ENCODE measurements at regions of chr15 and their contacts with region 1.

Region 1: DNA sequence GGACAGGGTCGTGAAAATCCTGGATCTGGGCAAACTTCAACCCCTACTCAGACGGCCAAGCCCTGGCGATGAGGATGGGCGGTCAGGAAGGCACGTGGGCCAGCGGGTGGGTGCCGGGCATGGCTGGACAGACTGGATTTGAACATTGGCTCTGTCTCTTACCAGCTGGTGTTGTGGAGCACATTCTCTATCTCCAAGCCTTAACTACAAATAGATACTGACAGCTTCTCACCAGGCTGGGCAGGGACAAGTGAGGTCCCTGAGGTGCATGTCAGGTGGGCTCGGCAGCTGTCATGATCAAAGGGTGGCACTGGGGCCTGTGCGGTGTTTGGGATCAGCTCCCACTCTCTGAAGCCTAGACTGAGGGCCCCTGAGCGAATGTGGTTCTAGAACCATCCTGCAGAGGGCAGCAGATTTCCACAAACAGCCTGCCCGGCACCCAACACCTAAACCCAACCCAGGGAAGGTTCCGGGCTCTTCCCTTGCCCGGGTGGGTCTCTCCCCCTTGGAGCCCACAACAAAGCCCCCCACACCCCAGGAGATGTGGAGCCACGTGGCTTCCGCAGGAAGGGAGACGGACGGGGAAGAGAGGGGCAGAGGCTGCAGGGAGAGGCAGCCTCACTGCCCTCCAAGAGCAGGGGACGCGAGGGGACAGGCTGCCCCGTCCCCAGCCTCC is 58.4 kb downstream of the RGMA start:
- DNase-seq: peak; percentile 90
- H3K4me3 ChIP-seq: no peak overlapping the region
- H3K27ac ChIP-seq: peak overlapping the region; percentile 84 to 91 (median 88)
- H3K4me1 ChIP-seq: peaks cover 0 to 75% (median 68%) of the 10 kb centered on the region in 4 donors
- H3K27me3 ChIP-seq: no peaks in the 10 kb centered on the region
- CTCF ChIP-seq: peak; percentile 83 to 92 (median 89)
- EP300 ChIP-seq: no peak
- POLR2A ChIP-seq: no peak

Region 2: DNA sequence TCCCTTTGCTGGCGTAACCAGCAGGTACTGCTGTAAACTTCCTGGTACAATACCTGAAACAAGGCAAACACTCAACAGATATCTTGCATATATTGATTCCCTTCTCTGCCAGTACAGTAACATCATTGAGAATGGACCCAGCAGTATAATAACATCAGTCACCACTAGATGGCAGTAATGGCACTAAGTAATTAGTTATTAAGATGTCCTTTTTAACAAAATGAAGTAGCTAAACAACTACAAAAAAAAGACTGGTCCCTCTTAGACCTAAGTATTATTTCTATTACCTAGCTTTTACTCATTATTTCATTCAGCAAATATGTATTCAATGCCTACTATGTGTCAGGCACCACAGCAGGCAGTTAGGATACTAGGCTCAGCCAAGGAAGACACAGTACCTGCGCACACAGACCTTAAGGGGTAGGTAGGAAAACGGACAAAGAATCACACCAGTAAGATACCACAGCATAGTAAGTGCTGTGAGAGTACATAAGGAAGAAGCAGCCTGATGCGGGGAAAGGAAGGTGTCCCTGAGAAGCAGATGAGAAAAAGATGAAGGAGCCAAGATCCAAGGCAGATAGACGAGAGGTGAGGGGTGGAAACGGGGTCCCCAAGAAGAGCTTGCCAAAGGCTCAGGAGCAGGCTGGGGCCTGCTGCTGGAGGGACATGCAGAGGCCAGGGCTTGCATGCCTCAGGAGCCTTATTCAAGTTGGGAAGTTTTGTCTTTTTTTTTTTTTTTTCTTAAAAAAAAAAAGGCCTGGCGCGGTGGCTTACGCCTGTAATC is 233.2 kb before region 1 on chr15:
- intact Hi-C with region 1: loop called (anchors 2 kb)
- DNase-seq: no peak
- H3K4me3 ChIP-seq: no peak overlapping the region
- H3K27ac ChIP-seq: peak overlapping the region; percentile 50 to 62 (median 56)
- H3K4me1 ChIP-seq: peaks cover 0 to 19% (median 12%) of the 10 kb centered on the region in 4 donors
- H3K27me3 ChIP-seq: no peaks in the 10 kb centered on the region
- CTCF ChIP-seq: peak; percentile 60 to 86 (median 80)
- EP300 ChIP-seq: no peak
- POLR2A ChIP-seq: no peak

Region 3: GRCh38 chr15:92968926-92969651 is 61.5 kb before region 1 on chr15:
- intact Hi-C with region 1: no loop called
- DNase-seq: no peak
- H3K4me3 ChIP-seq: no peak overlapping the region
- H3K27ac ChIP-seq: peak overlapping the region in 3 of 4 donors; percentile 36 to 50 (median 43)
- H3K4me1 ChIP-seq: peaks cover 0 to 27% (median 16%) of the 10 kb centered on the region in 4 donors
- H3K27me3 ChIP-seq: no peaks in the 10 kb centered on the region
- CTCF ChIP-seq: no peak
- EP300 ChIP-seq: no peak
- POLR2A ChIP-seq: no peak

Region 4: GRCh38 chr15:93087825-93088199 is 57.2 kb after region 1 on chr15:
- intact Hi-C with region 1: loop called (anchors 2 kb)
- DNase-seq: peak; percentile 92
- H3K4me3 ChIP-seq: peak overlapping the region; percentile 54 to 87 (median 72)
- H3K27ac ChIP-seq: peak overlapping the region; percentile 85 to 96 (median 90)
- H3K4me1 ChIP-seq: peaks cover 0 to 58% (median 37%) of the 10 kb centered on the region in 4 donors
- H3K27me3 ChIP-seq: peaks cover 0 to 5% (median 0%) of the 10 kb centered on the region in 3 donors
- CTCF ChIP-seq: peak; percentile 83 to 90 (median 89)
- EP300 ChIP-seq: no peak
- POLR2A ChIP-seq: no peak

Region 5: GRCh38 chr15:93515256-93516051 is 484.9 kb after region 1 on chr15:
- intact Hi-C with region 1: loop called (anchors 10 kb)
- DNase-seq: peak; percentile 79
- H3K4me3 ChIP-seq: no peak overlapping the region
- H3K27ac ChIP-seq: peak overlapping the region in 3 of 4 donors; percentile 41 to 53 (median 42)
- H3K4me1 ChIP-seq: peaks cover 0 to 34% (median 29%) of the 10 kb centered on the region in 4 donors
- H3K27me3 ChIP-seq: no peaks in the 10 kb centered on the region
- CTCF ChIP-seq: no peak
- EP300 ChIP-seq: no peak
- POLR2A ChIP-seq: no peak

Region 6: GRCh38 chr15:93974804-93975481 is 944.4 kb after region 1 on chr15:
- intact Hi-C with region 1: loop called (anchors 5 kb)
- DNase-seq: no peak
- H3K4me3 ChIP-seq: no peak overlapping the region
- H3K27ac ChIP-seq: no peak overlapping the region
- H3K4me1 ChIP-seq: peaks cover 0 to 4% (median under 1%) of the 10 kb centered on the region in 4 donors
- H3K27me3 ChIP-seq: no peaks in the 10 kb centered on the region
- CTCF ChIP-seq: peak in 3 of 4 experiments; percentile 35 to 55 (median 42)
- EP300 ChIP-seq: no peak
- POLR2A ChIP-seq: no peak

Region 7: DNA sequence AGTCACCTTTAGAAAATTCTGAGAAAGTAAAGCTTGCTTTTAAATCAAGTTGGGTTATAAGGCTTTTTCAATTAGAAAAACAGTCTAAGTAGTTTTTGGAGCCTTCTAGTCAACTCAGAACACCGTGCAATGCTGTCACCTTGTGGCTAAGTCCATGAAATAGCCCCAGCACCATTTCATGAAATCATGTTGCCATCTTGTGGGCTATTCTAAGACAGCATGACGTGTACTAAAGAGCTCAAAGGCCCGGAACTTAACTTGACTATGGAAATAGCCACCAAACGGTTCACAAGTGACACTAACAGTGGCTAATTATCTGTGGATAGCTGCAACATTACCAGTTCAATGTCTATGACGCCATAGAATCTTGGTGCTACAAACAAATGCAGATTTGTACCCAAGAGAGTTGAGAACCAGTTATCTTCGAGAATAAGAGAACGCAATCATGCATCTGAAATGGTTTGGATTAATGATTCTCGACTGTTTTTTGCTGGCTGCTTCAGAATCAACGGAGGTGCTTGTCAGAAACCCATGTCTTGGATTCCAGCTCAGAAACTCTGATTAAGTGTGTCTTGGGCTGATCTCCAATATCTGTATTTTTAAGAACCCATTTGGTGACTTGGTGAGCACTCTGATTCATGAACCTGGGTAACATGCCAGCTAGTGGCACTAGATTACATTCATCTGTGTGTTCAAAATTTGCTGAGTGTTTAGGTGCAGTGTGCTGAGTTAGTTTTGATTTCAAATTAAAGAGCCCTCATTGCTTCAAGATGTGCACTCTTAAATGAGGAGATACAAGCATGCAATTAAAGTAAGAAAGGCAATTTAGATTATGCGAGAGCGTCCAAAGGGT is 1089.6 kb after region 1 on chr15:
- intact Hi-C with region 1: loop called (anchors 2 kb)
- DNase-seq: peak; percentile 88
- H3K4me3 ChIP-seq: no peak overlapping the region
- H3K27ac ChIP-seq: peak overlapping the region; percentile 69 to 80 (median 75)
- H3K4me1 ChIP-seq: peaks cover 0 to 34% (median 13%) of the 10 kb centered on the region in 4 donors
- H3K27me3 ChIP-seq: no peaks in the 10 kb centered on the region
- CTCF ChIP-seq: peak; percentile 94 to 99 (median 99)
- EP300 ChIP-seq: no peak
- POLR2A ChIP-seq: no peak

Measured in sigmoid colon (tissue), 7 donors.